HepG2 (cell line): ENCODE measurements at regions of chr11 and their contacts with region 1.

Region 1: DNA sequence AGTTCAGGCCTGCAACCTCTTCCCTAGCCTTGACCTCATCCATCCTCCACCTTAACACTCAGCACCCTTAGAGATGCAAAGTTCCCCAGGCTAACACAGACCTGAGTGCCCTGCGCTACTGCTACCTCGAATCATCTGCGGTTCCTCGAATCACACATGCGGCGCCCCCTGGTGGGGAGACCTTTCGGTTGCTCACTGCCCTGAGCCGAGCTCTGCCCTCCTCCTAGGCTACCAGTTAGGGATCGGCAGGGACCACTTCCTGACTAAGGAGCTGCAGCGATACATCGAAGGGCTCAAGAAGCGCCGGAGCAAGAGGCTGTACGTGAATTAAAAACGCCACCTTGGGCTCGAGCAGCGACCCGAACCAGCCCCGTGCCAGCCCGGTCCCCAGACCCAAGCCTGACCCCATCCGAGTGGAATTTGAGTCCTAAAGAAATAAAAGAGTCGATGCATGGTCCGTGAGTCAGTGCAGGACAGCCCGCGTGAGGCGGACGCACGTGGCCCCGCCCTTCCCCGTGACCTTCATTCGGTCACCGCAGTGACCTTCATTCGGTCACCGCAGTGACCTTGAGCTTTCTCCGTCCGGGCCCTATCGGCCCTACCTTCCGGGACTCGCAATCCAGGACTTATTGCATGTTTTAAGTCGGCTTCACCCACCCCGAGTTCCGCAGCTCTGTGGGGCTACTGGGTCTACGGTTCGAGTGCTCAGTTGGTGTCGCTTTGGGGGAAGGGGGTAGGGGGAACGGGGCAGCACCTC is 830 bp upstream of the ESRRA start:
- DNase-seq: peak; percentile 80
- ATAC-seq: peak; percentile 55
- H3K4me3 ChIP-seq: peak overlapping the region; percentile 51 to 79 (median 70)
- H3K27ac ChIP-seq: peak overlapping the region; percentile 94
- H3K4me1 ChIP-seq: peaks cover 66% of the 10 kb centered on the region
- H3K27me3 ChIP-seq: peaks cover 3 to 13% of the 10 kb centered on the region in 2 experiments; a peak in 4 of 5 replicates
- CTCF ChIP-seq: peak; percentile 95
- EP300 ChIP-seq: no peak
- POLR2A ChIP-seq: peak in 1 of 2 experiments; percentile 62; a peak in 2 of 4 replicates
- RAD21 ChIP-seq: peak; percentile 48; the same call in 1 of the 2 replicates

Region 2: DNA sequence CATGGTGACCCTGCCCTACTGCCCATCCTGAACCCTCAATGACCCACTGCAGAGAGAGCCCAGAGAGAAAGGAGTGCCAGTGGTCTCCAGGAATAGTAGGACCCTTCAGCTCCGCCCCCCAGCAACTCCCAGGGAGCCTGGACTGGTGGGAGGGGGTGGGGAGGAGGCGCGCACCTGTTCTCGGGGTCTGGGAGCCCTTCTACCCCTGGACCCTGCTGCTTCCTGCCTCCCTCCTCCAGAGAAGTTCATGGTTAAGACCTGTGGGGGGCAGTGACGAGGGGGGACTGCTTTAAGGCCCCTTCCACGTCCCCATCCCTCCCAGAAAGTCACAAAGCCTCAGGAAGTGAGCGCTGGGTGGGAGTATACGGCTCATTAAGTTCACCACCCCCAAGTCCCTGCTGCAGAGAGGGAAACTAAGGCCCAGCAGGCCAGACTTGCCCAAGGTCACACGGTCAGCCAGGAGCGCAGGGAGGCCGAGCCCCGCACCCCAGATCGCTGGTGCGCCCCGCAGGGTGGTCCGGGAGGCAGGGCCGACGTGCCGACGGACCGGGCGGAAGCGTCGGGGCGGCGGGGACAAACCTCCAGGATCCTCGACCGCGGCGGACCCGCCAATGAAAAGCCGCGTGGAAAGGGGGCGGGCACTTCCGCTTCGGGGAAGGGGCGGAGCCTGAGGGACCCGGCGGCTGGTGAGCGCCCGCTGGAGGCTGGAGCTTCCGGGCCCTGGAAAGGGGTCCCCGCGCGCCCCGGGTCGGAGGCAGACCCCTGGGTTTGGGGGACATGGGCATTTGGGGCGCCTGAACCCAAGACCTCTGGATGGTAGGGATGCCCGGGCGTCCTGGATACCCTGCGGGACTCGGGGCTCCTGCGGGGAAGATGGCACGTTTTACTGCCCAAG is 78.6 kb before region 1 on chr11 and contains the starts of genes NUDT22 and TRPT1:
- CTCF ChIA-PET with region 1: no interaction called
- POLR2A ChIA-PET with region 1: interaction called, 13 read pairs
- in situ Hi-C with region 1: no loop called
- intact Hi-C with region 1: no loop called
- DNase-seq: peak; percentile 77
- ATAC-seq: peak; percentile 78
- H3K4me3 ChIP-seq: peak within 1 kb of the TSS; percentile 78 to 96 (median 82)
- H3K27ac ChIP-seq: peak within 1 kb of the TSS; percentile 56
- H3K4me1 ChIP-seq: peaks cover 34% of the 10 kb centered on the region
- H3K27me3 ChIP-seq: no peaks in the 10 kb centered on the region
- CTCF ChIP-seq: peak; percentile 65
- EP300 ChIP-seq: no peak
- POLR2A ChIP-seq: peak in 1 of 2 experiments; percentile 9; a peak in 1 of 4 replicates
- RAD21 ChIP-seq: no peak
- total RNA-seq, gene NUDT22: 38.5 and 39.8 TPM in 2 replicates
- total RNA-seq, gene TRPT1: 21.0 and 24.8 TPM in 2 replicates

Region 3: GRCh38 chr11:64240394-64241174 is 63.9 kb before region 1 on chr11 and contains the start of gene FKBP2:
- CTCF ChIA-PET with region 1: no interaction called
- POLR2A ChIA-PET with region 1: interaction called, 11 read pairs
- in situ Hi-C with region 1: loop called (anchors 5 kb)
- intact Hi-C with region 1: loop called (anchors 5 kb)
- DNase-seq: peak; percentile 93
- ATAC-seq: peak; percentile 46
- H3K4me3 ChIP-seq: peak within 1 kb of the TSS; percentile 84 to 93 (median 88)
- H3K27ac ChIP-seq: peak within 1 kb of the TSS; percentile 91
- H3K4me1 ChIP-seq: peaks cover 67% of the 10 kb centered on the region
- H3K27me3 ChIP-seq: no peaks in the 10 kb centered on the region; a peak in 1 of 5 replicates
- CTCF ChIP-seq: no peak
- EP300 ChIP-seq: no peak
- POLR2A ChIP-seq: peak in 1 of 2 experiments; percentile 88; a peak in 2 of 4 replicates
- RAD21 ChIP-seq: no peak
- total RNA-seq, gene FKBP2: 29.4 and 53.3 TPM in 2 replicates

Region 4: DNA sequence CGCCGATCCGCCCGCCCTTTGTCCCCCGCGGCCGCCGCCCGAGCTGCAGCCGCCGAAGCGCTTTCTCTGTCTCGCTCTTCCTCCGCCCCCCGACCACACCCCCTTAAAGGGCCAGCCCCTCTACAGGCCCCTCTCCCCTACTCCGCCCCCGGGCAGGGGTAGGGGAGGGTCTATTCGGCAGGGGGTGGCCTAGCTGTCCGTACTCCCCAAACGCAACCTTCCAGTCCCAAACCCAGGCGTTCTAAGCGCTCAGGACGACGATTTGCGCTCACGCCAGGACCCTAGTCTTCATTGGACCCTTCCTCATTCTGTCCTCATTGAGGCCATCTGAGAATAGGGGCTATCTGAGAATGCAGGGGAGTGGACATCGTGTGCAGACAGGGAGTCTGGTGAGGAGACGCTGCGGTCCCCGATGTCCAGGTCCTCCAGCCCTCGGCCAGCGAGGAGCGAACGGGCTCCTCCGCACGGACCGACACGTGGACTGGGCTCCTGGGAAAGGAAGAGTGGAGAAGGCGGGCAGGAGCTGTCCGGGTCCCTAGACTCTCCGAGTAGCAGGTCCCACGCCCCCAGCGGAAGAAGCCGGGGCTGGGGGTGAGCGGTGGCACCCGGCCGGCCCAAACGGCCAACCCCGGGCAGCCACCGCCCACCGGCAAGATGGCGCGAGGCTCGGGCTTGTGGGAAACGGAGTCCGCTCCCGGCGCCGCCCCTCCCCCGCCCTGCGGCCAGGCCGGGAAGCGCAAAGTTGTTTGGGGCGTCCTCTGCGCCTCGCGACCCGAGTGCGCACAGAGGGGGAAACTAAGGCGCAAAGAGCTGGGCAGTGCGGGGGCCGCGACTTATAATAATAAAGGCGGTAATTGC is 57.4 kb before region 1 on chr11 and contains the start of gene PPP1R14B:
- CTCF ChIA-PET with region 1: no interaction called
- POLR2A ChIA-PET with region 1: interaction called, 6 read pairs
- in situ Hi-C with region 1: loop called (anchors 5 kb)
- intact Hi-C with region 1: loop called (anchors 5 kb)
- DNase-seq: peak; percentile 80
- ATAC-seq: peak; percentile 71
- H3K4me3 ChIP-seq: peak within 1 kb of the TSS; percentile 79 to 95 (median 84)
- H3K27ac ChIP-seq: peak within 1 kb of the TSS; percentile 83
- H3K4me1 ChIP-seq: peaks cover 69% of the 10 kb centered on the region
- H3K27me3 ChIP-seq: no peaks in the 10 kb centered on the region; a peak in 1 of 5 replicates
- CTCF ChIP-seq: no peak; the same call in none of the 2 replicates
- EP300 ChIP-seq: no peak
- POLR2A ChIP-seq: peak in 1 of 2 experiments; percentile 44; a peak in 1 of 4 replicates
- RAD21 ChIP-seq: no peak
- total RNA-seq, gene PPP1R14B: 120 and 148 TPM in 2 replicates

Region 5: GRCh38 chr11:64284048-64284961 is 20.2 kb before region 1 on chr11 and contains the start of gene BAD:
- CTCF ChIA-PET with region 1: no interaction called
- POLR2A ChIA-PET with region 1: interaction called, 10 read pairs
- in situ Hi-C with region 1: no loop called
- intact Hi-C with region 1: no loop called
- DNase-seq: peak; percentile 86
- ATAC-seq: peak; percentile 92
- H3K4me3 ChIP-seq: peak within 1 kb of the TSS; percentile 69 to 97 (median 83)
- H3K27ac ChIP-seq: peak within 1 kb of the TSS; percentile 79
- H3K4me1 ChIP-seq: peaks cover 22% of the 10 kb centered on the region; the same call in 1 of the 2 replicates
- H3K27me3 ChIP-seq: no peaks in the 10 kb centered on the region; a peak in 1 of 5 replicates
- CTCF ChIP-seq: no peak
- EP300 ChIP-seq: no peak
- POLR2A ChIP-seq: peak in 1 of 2 experiments; percentile 10; a peak in 2 of 4 replicates
- RAD21 ChIP-seq: no peak
- total RNA-seq, gene BAD: 28.5 and 33.0 TPM in 2 replicates

Region 6: GRCh38 chr11:64358907-64359711 is 54.6 kb after region 1 on chr11 and contains the start of gene RPS6KA4:
- CTCF ChIA-PET with region 1: interaction called, 3 read pairs
- POLR2A ChIA-PET with region 1: interaction called, 11 read pairs
- in situ Hi-C with region 1: no loop called
- intact Hi-C with region 1: no loop called
- DNase-seq: no peak
- ATAC-seq: peak; percentile 78
- H3K4me3 ChIP-seq: peak within 1 kb of the TSS; percentile 80 to 96 (median 94)
- H3K27ac ChIP-seq: peak within 1 kb of the TSS; percentile 59
- H3K4me1 ChIP-seq: peaks cover 48% of the 10 kb centered on the region
- H3K27me3 ChIP-seq: no peaks in the 10 kb centered on the region; a peak in 1 of 5 replicates
- CTCF ChIP-seq: no peak
- EP300 ChIP-seq: no peak
- POLR2A ChIP-seq: no peak; a peak in 1 of 4 replicates
- RAD21 ChIP-seq: peak; percentile 14; the same call in 1 of the 2 replicates
- total RNA-seq, gene RPS6KA4: 8.9 and 14.2 TPM in 2 replicates